ENCODE measurements at regions of chr14 and their contacts with region 1.

Region 1: DNA sequence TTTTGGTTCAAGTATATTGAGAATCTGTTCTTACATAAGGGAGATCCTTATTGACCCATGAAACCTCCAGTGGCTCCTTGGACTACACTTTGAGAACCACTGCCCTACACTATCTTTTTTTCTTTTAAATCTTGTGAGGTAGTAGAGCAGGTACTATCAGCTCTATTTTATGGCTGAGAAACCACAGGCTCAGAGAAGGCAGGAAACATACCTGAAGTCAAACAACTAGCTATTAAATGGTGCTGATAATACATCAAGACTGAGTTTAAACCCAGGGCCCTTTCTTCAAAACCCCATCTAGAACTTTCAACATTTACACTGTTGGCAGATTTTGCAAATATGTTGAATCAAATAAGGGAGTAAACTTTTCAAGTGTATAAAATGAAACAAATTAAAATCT is 6.9 kb downstream of the ZBTB25 start:
- DNase-seq: no peak
- ATAC-seq: no peak
- H3K4me3 Mint-ChIP-seq: no peak overlapping the region
- H3K27ac Mint-ChIP-seq: peak overlapping the region; percentile 19
- H3K4me1 Mint-ChIP-seq: peaks cover 60% of the 10 kb centered on the region
- H3K27me3 Mint-ChIP-seq: no peaks in the 10 kb centered on the region
- CTCF ChIP-seq: no peak

Region 2: GRCh38 chr14:64510825-64511671 is 14.3 kb after region 1 on chr14:
- CTCF ChIA-PET with region 1: interaction called, 23 read pairs
- POLR2A ChIA-PET with region 1: interaction called, 3 read pairs
- intact Hi-C with region 1: no loop called
- DNase-seq: peak; percentile 81
- ATAC-seq: peak; percentile 28
- H3K4me3 Mint-ChIP-seq: peak overlapping the region; percentile 41
- H3K27ac Mint-ChIP-seq: peak overlapping the region; percentile 76
- H3K4me1 Mint-ChIP-seq: peaks cover 70% of the 10 kb centered on the region
- H3K27me3 Mint-ChIP-seq: no peaks in the 10 kb centered on the region
- CTCF ChIP-seq: peak; percentile 90

Region 3: DNA sequence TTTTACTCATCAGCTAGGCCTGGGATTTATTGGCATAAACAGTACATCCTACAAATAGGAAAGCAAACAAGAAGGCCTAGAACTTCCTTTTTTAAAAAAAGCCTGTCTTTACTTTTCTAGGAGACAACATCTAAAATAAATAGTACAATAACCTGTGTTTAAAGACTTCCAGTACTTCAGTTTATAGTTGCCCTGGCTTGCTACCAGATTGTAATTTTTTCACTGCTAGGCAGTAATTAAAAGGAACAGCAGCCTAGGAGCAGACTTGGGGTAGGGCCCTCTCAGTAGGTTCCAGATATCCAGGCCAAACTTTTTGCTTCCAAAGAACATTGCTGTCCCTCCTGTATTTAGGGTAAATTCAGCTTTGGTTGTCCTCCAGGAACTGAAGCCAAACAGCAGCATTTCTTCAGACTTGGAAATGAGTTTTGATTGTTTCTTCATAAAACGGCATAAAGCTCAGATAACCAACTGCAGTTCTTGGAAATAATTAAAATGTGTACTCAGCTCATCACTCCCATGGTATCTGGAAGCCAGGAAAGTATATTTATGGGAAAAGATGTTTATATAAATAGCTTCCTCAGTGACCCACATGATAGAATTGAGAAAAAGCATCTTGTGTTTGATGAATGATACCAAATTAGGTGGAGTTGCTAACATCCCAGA is 114.7 kb after region 1 on chr14:
- CTCF ChIA-PET with region 1: no interaction called
- POLR2A ChIA-PET with region 1: no interaction called
- intact Hi-C with region 1: no loop called
- DNase-seq: no peak
- ATAC-seq: no peak
- H3K4me3 Mint-ChIP-seq: no peak overlapping the region
- H3K27ac Mint-ChIP-seq: no peak overlapping the region
- H3K4me1 Mint-ChIP-seq: peaks cover 5% of the 10 kb centered on the region
- H3K27me3 Mint-ChIP-seq: peaks cover under 1% of the 10 kb centered on the region
- CTCF ChIP-seq: no peak

Measured in activated CD8-positive, alpha-beta T cell treated with anti-CD3 and anti-CD28 coated beads for 36 hours (primary cell).